GM12878 (cell line): ENCODE measurements at regions of chr5 and their contacts with region 1.

Region 1: DNA sequence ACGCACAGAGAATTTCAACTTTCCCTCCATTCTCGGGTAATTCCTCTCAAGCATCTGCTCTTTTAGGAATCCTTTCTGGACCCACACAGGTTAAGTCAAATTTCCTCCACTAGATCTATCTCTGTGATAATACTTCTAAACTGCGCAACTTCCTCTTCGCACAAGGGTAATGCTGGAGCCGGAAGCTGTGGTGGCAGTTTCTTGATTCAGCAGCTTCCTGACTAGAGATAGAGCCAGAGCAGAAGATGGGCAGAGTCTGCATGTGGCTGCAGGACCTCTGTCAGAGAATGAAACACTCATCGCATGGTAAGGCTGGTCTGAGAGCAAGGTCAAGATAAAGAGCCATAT is 11.1 kb upstream of the CDC42SE2 start:
- DNase-seq: peak; percentile 81
- ATAC-seq: peak; percentile 79
- H3K4me3 ChIP-seq: peak overlapping the region; percentile 38; the same call in 1 of the 2 replicates
- H3K27ac ChIP-seq: peak overlapping the region; percentile 80
- H3K4me1 ChIP-seq: peaks cover 46% of the 10 kb centered on the region
- H3K27me3 ChIP-seq: no peaks in the 10 kb centered on the region
- CTCF ChIP-seq: no peak
- EP300 ChIP-seq: 0 out of 4 replicates have a peak, but pooled peaks of 1 of the 2 experiments have one; percentile 30
- POLR2A ChIP-seq: peak; percentile 72
- RAD21 ChIP-seq: 0 out of 2 replicates have a peak, but pooled peaks have one; percentile 14

Region 2: GRCh38 chr5:131230406-131230805 is 22.4 kb before region 1 on chr5:
- CTCF ChIA-PET with region 1: interaction called, 65 read pairs
- POLR2A ChIA-PET with region 1: interaction called, 141 read pairs
- RAD21 ChIA-PET with region 1: interaction called, 161 read pairs
- SMC1A ChIA-PET with region 1: interaction called, 1,218 read pairs
- in situ Hi-C with region 1: no loop called
- intact Hi-C with region 1: loop called (anchors 2 kb)
- DNase-seq: no peak
- ATAC-seq: peak; percentile 89
- H3K4me3 ChIP-seq: peak overlapping the region; percentile 6
- H3K27ac ChIP-seq: peak overlapping the region; percentile 38
- H3K4me1 ChIP-seq: peaks cover 14% of the 10 kb centered on the region; the same call in 1 of the 2 replicates
- H3K27me3 ChIP-seq: no peaks in the 10 kb centered on the region
- CTCF ChIP-seq: no peak
- EP300 ChIP-seq: no peak
- POLR2A ChIP-seq: no peak
- RAD21 ChIP-seq: no peak

Region 3: GRCh38 chr5:131239686-131240085 is 13.1 kb before region 1 on chr5:
- CTCF ChIA-PET with region 1: interaction called, 5 read pairs
- POLR2A ChIA-PET with region 1: interaction called, 13 read pairs
- RAD21 ChIA-PET with region 1: interaction called, 15 read pairs
- SMC1A ChIA-PET with region 1: interaction called, 15 read pairs
- in situ Hi-C with region 1: no loop called
- intact Hi-C with region 1: no loop called
- DNase-seq: no peak
- ATAC-seq: no peak
- H3K4me3 ChIP-seq: no peak overlapping the region
- H3K27ac ChIP-seq: no peak overlapping the region
- H3K4me1 ChIP-seq: no peaks in the 10 kb centered on the region
- H3K27me3 ChIP-seq: no peaks in the 10 kb centered on the region
- CTCF ChIP-seq: no peak
- EP300 ChIP-seq: no peak
- POLR2A ChIP-seq: no peak
- RAD21 ChIP-seq: no peak

Region 4: DNA sequence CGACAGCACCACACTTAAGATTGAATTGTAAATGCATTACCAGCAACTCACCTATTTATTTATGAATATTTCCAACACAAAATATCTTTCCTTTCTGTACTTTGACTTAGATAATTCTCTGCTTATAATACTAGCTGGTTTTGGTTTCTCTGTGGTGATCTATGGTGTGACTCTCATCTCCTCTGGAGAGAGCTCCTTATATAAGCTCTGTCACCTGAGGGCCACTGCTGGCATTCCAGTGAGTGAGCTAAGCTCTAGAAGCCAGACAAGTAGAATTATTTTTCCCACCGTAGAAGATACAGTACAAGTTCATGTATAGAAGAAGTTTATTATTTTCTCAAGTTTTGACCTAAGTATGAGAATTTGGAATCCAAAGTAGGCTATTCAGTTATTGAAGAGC is 122.6 kb after region 1 on chr5:
- CTCF ChIA-PET with region 1: interaction called, 5 read pairs
- POLR2A ChIA-PET with region 1: no interaction called
- RAD21 ChIA-PET with region 1: interaction called, 4 read pairs
- SMC1A ChIA-PET with region 1: interaction called, 12 read pairs
- in situ Hi-C with region 1: no loop called
- intact Hi-C with region 1: no loop called
- DNase-seq: no peak
- ATAC-seq: peak; percentile 35
- H3K4me3 ChIP-seq: peak overlapping the region; percentile 37; the same call in 1 of the 2 replicates
- H3K27ac ChIP-seq: peak overlapping the region; percentile 88
- H3K4me1 ChIP-seq: peaks cover 77% of the 10 kb centered on the region
- H3K27me3 ChIP-seq: no peaks in the 10 kb centered on the region
- CTCF ChIP-seq: no peak
- EP300 ChIP-seq: no peak
- POLR2A ChIP-seq: no peak
- RAD21 ChIP-seq: no peak